ENCODE measurements at regions of chr1 and their contacts with region 1.

Region 1: DNA sequence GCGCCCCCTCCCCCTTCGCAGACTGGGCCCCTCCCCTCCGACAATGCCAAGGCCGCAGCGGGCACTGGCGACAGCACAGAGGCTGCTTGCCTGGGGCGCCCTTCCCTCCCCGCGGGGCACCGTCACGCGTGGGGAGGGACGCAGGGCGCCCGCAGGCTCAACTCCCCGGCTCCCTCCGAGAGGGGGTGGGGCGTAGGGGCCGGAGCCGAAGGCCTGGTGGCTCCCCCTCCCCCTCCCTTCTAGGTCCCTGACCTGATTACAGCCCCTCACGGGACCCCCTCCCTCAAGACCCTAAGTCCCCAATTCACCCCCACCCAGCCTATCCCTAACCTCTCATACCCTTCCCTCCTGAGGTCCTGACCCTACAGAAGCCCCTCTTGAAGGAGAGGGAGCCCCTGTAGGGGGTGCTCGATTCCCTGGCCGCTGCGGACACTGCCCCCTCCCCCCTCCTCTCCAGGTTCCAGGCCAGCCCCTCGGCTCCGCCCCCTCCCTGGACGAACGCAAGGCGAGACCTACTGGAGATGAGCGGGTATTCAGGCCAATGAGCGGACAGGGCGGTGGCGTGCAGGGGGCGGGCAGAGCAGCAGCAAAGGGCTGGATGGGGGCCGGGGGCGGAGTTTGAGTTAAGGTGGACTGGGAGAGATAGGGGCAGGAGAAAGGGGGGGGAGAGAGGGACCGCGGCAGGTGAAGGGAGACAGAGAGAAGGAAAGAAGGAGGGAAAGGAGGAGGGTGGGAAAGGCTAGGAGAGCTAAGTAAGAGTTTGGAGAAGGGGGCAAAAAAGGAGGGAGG is 733 bp upstream of the ZBTB7B start:
- DNase-seq: peak; percentile 100
- H3K4me3 Mint-ChIP-seq: peak overlapping the region; percentile 91
- H3K27ac Mint-ChIP-seq: peak overlapping the region; percentile 94
- H3K4me1 Mint-ChIP-seq: peaks cover 50% of the 10 kb centered on the region
- H3K27me3 Mint-ChIP-seq: no peaks in the 10 kb centered on the region

Region 2: GRCh38 chr1:154404984-154405761 is 596.7 kb before region 1 on chr1 and contains the start of gene IL6R:
- CTCF ChIA-PET with region 1: no interaction called
- intact Hi-C with region 1: loop called (anchors 5 kb)
- DNase-seq: peak; percentile 87
- H3K4me3 Mint-ChIP-seq: peak within 1 kb of the TSS; percentile 94
- H3K27ac Mint-ChIP-seq: peak within 1 kb of the TSS; percentile 96
- H3K4me1 Mint-ChIP-seq: peaks cover 77% of the 10 kb centered on the region
- H3K27me3 Mint-ChIP-seq: no peaks in the 10 kb centered on the region
- total RNA-seq, gene IL6R: 17.3 to 25.9 TPM

Region 3: DNA sequence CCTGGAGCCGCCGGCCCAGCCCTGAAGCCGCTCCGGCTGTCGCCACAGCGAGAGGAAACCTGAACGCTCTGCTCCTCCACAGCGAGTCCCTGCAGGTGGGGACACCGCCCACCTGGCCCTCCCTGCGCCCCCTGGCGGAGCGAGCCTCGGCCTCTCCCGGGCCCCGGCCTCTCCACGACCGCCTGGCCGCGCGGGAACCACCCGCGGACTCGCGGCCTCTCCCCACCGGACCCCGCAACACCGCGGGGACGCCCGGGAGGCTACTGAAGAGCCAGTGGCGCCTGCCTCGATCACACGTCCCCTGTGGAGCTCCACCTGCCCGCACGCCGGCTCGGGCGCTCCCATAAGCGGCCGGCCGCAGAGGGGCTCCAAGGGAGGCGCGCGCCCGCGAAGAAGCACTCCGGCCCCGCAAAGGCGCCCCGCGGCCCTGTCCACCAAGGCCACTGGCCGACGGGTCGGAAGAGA is 241.4 kb before region 1 on chr1:
- CTCF ChIA-PET with region 1: no interaction called
- intact Hi-C with region 1: loop called (anchors 5 kb)
- DNase-seq: peak; percentile 85
- H3K4me3 Mint-ChIP-seq: peak overlapping the region; percentile 75
- H3K27ac Mint-ChIP-seq: peak overlapping the region; percentile 99
- H3K4me1 Mint-ChIP-seq: peaks cover 56% of the 10 kb centered on the region
- H3K27me3 Mint-ChIP-seq: no peaks in the 10 kb centered on the region

Region 4: DNA sequence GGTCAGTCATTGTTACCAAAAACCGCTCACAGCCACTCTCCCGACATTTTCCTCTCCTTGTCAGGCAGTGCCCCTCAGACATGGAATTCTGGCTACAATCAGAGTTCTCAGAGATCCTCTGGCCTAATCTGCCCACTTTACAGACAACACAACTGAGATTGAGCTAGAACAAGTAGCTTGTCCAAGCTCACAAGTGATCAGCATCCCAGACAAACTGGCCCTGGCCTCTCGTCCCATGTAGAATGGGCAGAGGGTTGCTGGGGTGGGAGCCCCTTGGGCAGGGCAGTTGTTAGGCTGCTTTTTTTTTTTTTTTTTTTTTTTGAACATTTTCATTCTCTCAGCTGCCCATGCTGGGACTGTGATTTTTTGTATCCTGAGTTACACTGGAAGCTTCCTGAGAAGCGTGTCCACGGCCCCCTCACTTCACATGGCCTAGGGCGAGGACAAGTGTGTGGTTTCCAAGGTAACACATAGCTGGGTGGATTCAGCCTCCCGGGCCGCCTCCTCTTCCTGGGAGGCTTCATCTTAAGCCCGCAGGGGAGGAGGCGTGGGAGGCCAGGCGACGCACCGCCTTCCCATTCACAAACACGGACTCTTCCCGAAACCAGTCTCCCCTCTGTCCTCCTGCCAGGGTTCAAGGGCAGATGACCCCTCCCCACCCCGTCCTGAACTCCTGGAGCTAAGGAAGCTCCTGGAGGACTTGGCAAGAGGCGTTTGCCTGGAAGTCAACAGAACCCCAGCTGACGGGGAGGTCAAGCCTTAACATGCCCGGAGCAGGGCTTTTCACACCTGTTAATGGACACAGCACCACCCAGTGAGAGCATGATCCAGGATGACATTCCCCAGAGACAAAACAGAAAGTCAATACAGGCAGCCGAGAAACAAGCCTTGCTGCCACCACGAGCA is 188.7 kb before region 1 on chr1:
- CTCF ChIA-PET with region 1: no interaction called
- intact Hi-C with region 1: no loop called
- DNase-seq: no peak
- H3K4me3 Mint-ChIP-seq: no peak overlapping the region
- H3K27ac Mint-ChIP-seq: no peak overlapping the region
- H3K4me1 Mint-ChIP-seq: peaks cover 16% of the 10 kb centered on the region
- H3K27me3 Mint-ChIP-seq: peaks cover 3% of the 10 kb centered on the region

Region 5: DNA sequence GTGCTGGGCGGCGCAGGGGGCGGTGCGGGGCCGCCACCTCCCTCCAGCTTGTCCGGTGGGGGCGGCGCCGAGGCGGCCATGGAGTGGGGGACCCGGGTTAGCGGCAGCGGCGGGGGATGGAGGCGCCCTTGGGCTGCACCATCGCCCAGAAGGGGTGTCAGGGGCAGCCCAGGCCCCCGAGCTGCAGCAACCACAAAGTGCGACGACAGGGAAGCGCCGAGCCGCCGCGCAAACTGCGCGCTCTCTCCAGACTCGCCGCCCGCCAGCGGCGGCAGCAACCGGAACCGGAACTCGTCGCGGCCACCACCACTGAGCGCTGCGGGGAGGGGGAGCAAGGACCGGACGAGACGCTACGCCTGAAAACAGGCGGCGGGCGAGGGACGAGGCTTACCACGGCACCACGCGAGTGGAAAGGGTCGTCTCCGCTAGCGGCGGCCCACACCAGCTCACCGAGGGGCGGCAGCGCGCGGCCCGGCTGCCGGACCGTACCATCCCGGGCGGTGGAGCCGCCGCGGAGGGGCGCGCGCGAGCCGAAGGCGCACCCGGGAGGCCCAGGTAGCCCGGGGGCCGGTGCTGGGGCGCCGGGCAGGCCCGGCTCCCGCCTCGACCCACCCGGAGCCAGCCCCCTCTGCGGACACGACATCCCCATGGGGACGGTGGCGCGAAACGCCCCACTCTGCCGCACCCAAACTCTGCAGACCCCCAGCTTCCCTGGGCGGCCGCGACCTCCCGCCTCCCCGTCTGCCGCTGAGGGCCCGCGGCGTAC is 40.2 kb before region 1 on chr1 and contains the start of gene PYGO2:
- CTCF ChIA-PET with region 1: interaction called, 17 read pairs
- intact Hi-C with region 1: loop called (anchors 1 kb)
- DNase-seq: peak; percentile 86
- H3K4me3 Mint-ChIP-seq: peak within 1 kb of the TSS; percentile 96
- H3K27ac Mint-ChIP-seq: peak within 1 kb of the TSS; percentile 94
- H3K4me1 Mint-ChIP-seq: peaks cover 40% of the 10 kb centered on the region
- H3K27me3 Mint-ChIP-seq: no peaks in the 10 kb centered on the region
- total RNA-seq, gene PYGO2: 35.6 to 36.3 TPM

Region 6: DNA sequence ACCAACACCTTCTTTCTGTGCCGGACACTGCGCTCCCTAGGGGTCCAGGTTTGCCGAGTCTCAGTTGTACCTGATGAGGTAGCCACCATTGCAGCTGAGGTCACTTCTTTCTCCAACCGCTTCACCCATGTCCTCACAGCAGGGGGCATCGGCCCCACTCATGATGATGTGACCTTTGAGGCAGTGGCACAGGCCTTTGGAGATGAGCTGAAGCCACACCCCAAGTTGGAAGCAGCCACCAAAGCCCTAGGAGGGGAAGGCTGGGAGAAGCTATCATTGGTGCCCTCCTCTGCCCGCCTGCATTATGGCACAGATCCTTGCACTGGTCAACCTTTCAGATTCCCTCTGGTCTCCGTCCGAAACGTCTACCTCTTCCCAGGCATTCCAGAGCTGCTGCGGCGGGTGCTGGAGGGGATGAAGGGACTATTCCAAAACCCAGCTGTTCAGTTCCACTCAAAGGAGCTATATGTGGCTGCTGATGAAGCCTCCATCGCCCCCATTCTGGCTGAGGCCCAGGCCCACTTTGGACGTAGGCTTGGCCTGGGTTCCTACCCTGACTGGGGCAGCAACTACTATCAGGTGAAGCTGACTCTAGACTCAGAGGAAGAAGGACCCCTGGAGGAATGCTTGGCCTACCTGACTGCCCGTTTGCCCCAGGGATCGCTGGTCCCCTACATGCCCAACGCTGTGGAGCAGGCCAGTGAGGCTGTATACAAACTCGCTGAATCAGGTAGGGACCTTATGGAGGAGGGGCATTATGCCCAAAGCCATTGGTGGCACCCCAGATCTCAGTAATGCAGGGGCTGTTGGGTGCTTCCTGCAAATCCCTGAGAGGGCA is 13.5 kb before region 1 on chr1:
- CTCF ChIA-PET with region 1: interaction called, 24 read pairs
- intact Hi-C with region 1: loop called (anchors 1 kb)
- DNase-seq: peak; percentile 20
- H3K4me3 Mint-ChIP-seq: no peak overlapping the region
- H3K27ac Mint-ChIP-seq: no peak overlapping the region
- H3K4me1 Mint-ChIP-seq: peaks cover 23% of the 10 kb centered on the region
- H3K27me3 Mint-ChIP-seq: no peaks in the 10 kb centered on the region

Region 7: GRCh38 chr1:155063550-155064110 is 61.8 kb after region 1 on chr1 and contains the start of gene EFNA4:
- CTCF ChIA-PET with region 1: interaction called, 3 read pairs
- intact Hi-C with region 1: loop called (anchors 1 kb)
- DNase-seq: peak; percentile 89
- H3K4me3 Mint-ChIP-seq: peak within 1 kb of the TSS; percentile 86
- H3K27ac Mint-ChIP-seq: no peak within 1 kb of the TSS
- H3K4me1 Mint-ChIP-seq: peaks cover 30% of the 10 kb centered on the region
- H3K27me3 Mint-ChIP-seq: no peaks in the 10 kb centered on the region
- total RNA-seq, gene EFNA4: 3.3 to 4.5 TPM

Region 8: DNA sequence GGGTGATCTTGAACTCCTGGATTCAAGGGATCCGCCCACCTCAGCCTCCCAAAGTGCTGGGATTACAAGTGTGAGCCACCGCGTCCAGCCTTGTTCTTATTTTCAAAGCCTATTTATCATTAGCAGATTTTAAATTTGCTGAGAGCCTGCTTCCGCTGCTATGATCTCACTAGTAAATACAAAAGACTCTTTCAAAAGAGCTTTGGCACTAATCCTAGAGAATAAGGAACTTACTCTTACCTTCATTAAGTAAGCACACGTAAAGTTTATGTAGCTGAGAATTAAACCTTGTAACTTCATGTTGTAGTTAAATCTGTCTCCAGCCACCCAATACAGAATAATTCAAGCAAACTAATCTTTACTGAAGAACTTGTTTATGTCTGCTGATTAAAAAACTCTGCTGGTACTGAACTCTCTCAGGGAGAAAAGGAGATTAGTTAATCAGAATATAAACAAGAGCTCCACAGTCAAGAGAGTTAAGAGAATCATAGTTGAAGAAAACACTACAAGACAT is 391.1 kb after region 1 on chr1:
- CTCF ChIA-PET with region 1: no interaction called
- intact Hi-C with region 1: no loop called
- DNase-seq: no peak
- H3K4me3 Mint-ChIP-seq: no peak overlapping the region
- H3K27ac Mint-ChIP-seq: no peak overlapping the region
- H3K4me1 Mint-ChIP-seq: no peaks in the 10 kb centered on the region
- H3K27me3 Mint-ChIP-seq: no peaks in the 10 kb centered on the region